Prostate gland (tissue), 2 donors: ENCODE measurements at regions of chr10 and their contacts with region 1.

Region 1: DNA sequence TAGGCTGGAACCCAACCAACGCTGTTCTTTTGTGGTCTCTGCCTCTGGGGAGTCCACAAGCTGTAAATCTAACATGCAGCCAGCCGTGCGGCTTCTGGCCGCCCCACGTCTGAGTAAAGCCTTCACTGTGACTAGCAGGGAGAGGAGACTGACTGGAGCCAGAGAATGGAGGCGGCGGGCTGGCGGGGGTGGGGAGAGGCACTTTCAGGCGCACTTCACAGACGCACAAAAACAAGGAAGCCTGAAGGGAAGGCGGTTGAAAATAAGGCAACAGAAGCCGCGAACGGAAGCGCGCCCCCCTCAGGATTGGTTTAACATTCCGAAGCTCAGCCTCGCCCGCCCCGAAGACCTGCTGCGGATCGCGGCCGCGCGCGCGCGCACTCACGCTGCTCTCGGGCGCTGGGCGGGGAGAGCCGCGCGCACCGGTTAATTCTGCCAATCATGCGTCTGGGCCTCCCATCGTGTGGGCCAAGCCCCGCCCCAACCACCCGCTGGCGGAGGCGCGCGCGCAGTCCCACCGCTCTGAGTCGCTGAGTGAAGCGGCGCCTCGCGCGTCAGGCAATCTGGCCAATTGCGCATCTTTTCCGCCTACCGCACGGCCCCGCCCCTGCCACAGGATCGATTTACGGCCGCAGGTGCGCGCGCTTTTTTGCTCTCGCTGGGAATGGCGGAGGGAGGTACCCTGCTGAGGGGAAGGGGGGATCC is at the start of gene SFR1:
- DNase-seq: peak; percentile 99
- H3K4me3 ChIP-seq: peak within 1 kb of the TSS; percentile 63 to 71
- H3K27ac ChIP-seq: peak within 1 kb of the TSS; percentile 93 to 98
- H3K4me1 ChIP-seq: peaks cover 3% of the 10 kb centered on the region
- H3K27me3 ChIP-seq: no peaks in the 10 kb centered on the region
- CTCF ChIP-seq: peak; percentile 48 to 83 (median 64)
- POLR2A ChIP-seq: peak; percentile 87
- total RNA-seq, gene SFR1: 8.1 to 16.3 TPM

Region 2: GRCh38 chr10:103429647-103430046 is 692.0 kb before region 1 on chr10:
- intact Hi-C with region 1: no loop called
- DNase-seq: no peak
- H3K4me3 ChIP-seq: no peak overlapping the region
- H3K27ac ChIP-seq: no peak overlapping the region
- H3K4me1 ChIP-seq: no peaks in the 10 kb centered on the region
- H3K27me3 ChIP-seq: no peaks in the 10 kb centered on the region
- CTCF ChIP-seq: no peak
- POLR2A ChIP-seq: no peak

Region 3: GRCh38 chr10:103888113-103888841 is 233.4 kb before region 1 on chr10:
- intact Hi-C with region 1: loop called (anchors 5 kb)
- DNase-seq: peak; percentile 42
- H3K4me3 ChIP-seq: no peak overlapping the region
- H3K27ac ChIP-seq: no peak overlapping the region
- H3K4me1 ChIP-seq: no peaks in the 10 kb centered on the region
- H3K27me3 ChIP-seq: no peaks in the 10 kb centered on the region
- CTCF ChIP-seq: peak in 3 of 4 experiments; percentile 88 to 98 (median 92)
- POLR2A ChIP-seq: no peak

Region 4: GRCh38 chr10:104034401-104035193 is 87.1 kb before region 1 on chr10:
- intact Hi-C with region 1: no loop called
- DNase-seq: no peak
- H3K4me3 ChIP-seq: no peak overlapping the region
- H3K27ac ChIP-seq: no peak overlapping the region
- H3K4me1 ChIP-seq: no peaks in the 10 kb centered on the region
- H3K27me3 ChIP-seq: no peaks in the 10 kb centered on the region
- CTCF ChIP-seq: no peak
- POLR2A ChIP-seq: no peak

Region 5: GRCh38 chr10:104080762-104081161 is 40.9 kb before region 1 on chr10:
- intact Hi-C with region 1: no loop called
- DNase-seq: no peak
- H3K4me3 ChIP-seq: no peak overlapping the region
- H3K27ac ChIP-seq: no peak overlapping the region
- H3K4me1 ChIP-seq: no peaks in the 10 kb centered on the region
- H3K27me3 ChIP-seq: no peaks in the 10 kb centered on the region
- CTCF ChIP-seq: peak in 1 of 4 experiments; percentile 30
- POLR2A ChIP-seq: no peak

Region 6: DNA sequence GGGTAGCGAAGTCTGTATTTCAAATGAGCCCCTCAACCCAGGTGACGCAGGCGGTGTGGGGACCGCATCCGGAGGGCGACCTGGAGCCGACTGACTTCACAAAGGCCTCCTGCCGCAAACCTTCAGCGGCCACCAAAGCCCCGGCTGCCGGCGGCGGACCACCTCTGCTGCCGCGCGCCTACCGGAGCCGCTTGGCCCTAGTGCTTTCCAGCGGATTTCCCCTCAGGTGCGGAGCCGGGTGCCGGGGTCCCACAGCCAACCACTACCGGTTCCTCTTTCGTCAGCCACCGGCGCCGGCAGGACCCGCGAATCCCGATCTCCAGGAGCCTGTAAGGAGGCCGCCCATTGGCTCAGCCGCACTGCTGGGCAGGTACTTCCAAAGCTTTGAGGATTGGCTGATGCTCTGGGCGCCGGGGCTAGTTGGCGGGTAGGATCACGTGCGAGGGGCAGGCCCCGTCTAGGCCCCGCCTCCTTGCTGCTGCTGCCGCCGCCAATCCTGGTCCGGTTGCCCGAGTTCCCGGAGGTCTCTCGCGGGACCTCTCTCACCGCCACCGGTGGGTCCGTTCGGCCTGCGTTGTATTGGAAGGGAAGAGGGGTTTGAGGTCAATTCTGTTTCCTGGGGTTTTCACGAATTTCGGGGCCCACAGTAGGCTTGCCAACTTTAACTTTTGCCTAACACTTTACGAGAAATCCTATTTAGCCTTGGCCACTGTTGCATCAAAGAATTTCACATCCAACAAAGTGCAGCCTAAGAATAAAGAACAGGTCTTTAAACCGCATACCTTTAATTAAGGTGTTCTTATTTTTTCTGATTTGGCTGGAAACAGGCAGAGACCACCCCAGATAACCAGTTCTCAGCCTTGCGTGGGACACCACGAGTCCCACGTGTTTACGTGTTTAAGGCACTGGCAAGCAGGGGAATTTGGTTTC is 147.3 kb after region 1 on chr10 and contains the start of gene GSTO2:
- intact Hi-C with region 1: loop called (anchors 10 kb)
- DNase-seq: peak; percentile 99
- H3K4me3 ChIP-seq: peak within 1 kb of the TSS; percentile 64 to 68
- H3K27ac ChIP-seq: peak within 1 kb of the TSS; percentile 66 to 70
- H3K4me1 ChIP-seq: no peaks in the 10 kb centered on the region
- H3K27me3 ChIP-seq: no peaks in the 10 kb centered on the region
- CTCF ChIP-seq: no peak
- POLR2A ChIP-seq: peak; percentile 75
- total RNA-seq, gene GSTO2: 18.1 to 37.3 TPM

Region 7: DNA sequence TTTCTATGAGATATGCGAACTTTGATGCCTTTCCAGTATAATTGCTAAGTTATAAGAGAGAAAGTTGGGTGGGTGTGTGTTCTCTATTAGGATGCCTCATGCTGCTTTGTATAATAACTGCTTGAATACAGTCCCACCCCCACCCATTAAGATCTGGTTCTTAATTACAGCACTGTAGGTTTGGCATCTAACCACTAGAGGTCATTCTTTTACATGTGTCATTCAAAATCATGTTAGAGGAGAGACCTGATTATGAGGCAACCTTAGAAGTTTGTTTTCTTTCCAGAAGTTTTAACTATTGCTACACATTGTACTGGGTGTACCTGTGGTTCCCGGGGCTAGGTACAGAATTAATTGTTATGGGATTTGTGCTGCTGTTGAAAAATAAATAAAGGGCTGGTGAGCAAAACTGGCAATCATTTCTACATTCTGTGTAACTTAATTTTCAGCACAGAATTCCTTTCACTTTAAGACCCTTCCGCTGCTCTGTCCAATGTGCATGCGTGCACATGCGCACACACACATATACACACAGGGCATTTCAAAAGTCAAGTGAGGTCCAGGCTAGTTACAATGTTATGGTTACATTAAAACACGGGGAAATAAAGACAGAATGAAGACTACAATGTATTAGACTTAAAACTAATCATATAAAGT is 1675.7 kb after region 1 on chr10:
- intact Hi-C with region 1: no loop called
- DNase-seq: no peak
- H3K4me3 ChIP-seq: no peak overlapping the region
- H3K27ac ChIP-seq: no peak overlapping the region
- H3K4me1 ChIP-seq: no peaks in the 10 kb centered on the region
- H3K27me3 ChIP-seq: no peaks in the 10 kb centered on the region
- CTCF ChIP-seq: peak in 1 of 4 experiments; percentile 14
- POLR2A ChIP-seq: no peak